Calu3 (cell line): ENCODE measurements at regions of chr1 and their contacts with region 1.

Region 1: GRCh38 chr1:153532769-153533599 is 2.8 kb downstream of the S100A6 start:
- DNase-seq: peak; percentile 93
- H3K4me3 Mint-ChIP-seq: peak overlapping the region; percentile 93
- H3K27ac Mint-ChIP-seq: peak overlapping the region; percentile 77
- H3K4me1 Mint-ChIP-seq: peaks cover 47% of the 10 kb centered on the region
- H3K27me3 Mint-ChIP-seq: no peaks in the 10 kb centered on the region
- CTCF ChIP-seq: peak; percentile 88

Region 2: GRCh38 chr1:153520230-153520629 is 12.8 kb before region 1 on chr1:
- CTCF ChIA-PET with region 1: interaction called, 34 read pairs
- intact Hi-C with region 1: no loop called
- DNase-seq: peak; percentile 84
- H3K4me3 Mint-ChIP-seq: peak overlapping the region; percentile 33
- H3K27ac Mint-ChIP-seq: peak overlapping the region; percentile 69
- H3K4me1 Mint-ChIP-seq: peaks cover 49% of the 10 kb centered on the region
- H3K27me3 Mint-ChIP-seq: no peaks in the 10 kb centered on the region
- CTCF ChIP-seq: no peak

Region 3: DNA sequence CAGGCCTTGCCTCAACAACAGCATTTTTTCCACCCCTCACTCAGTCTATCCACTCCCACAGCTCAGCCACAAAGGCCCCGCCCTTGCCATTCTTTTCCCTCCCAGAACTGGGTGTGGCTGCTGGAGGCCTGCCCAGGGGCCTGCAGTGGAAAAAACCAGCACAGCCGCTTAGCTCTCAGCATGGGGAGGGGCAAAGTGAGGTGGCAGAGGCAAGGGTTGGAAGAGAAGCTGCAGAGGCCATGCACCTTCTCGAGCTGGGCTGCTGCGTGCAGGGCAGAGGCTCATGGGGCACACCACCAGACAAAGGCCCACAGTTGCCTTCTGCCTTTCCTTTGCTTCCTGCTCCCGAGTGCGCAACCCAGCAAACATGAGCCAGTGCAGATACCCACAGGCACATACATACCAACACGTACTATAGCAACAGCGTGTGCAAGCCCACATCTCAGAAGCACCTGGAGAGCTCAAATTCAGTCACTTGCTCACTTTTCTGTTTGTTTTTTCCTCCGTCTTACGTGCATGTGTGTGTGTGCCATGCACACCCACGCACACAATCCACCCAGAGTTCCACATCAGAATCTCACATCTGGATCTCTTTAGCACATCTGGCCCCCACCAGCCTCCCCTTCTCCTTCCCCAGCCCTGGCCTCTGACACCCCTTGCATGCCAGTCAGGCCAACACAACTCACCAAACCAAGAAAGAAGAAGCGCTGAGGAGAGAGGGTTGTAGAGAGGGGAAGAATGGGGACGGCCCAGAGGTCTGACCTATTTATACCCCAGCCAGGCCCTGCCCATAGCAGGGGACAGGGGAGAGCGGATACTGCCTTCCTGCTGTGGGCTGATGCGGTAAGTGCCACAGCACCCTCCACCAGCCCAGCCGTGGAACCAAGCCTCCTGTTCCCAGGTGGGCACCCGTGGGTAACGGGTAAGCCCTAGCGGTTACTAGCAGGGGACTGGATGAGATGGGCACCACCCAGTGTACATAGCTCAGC is 12.4 kb after region 1 on chr1 and contains the start of gene S100A4:
- CTCF ChIA-PET with region 1: interaction called, 29 read pairs
- intact Hi-C with region 1: no loop called
- DNase-seq: peak; percentile 98
- H3K4me3 Mint-ChIP-seq: peak within 1 kb of the TSS; percentile 68
- H3K27ac Mint-ChIP-seq: peak within 1 kb of the TSS; percentile 94
- H3K4me1 Mint-ChIP-seq: peaks cover 87% of the 10 kb centered on the region
- H3K27me3 Mint-ChIP-seq: no peaks in the 10 kb centered on the region
- CTCF ChIP-seq: no peak
- total RNA-seq, gene S100A4: 19.8 and 20.5 TPM in 2 replicates

Region 4: GRCh38 chr1:153566440-153567379 is 33.7 kb after region 1 on chr1:
- CTCF ChIA-PET with region 1: interaction called, 117 read pairs
- intact Hi-C with region 1: loop called (anchors 1 kb)
- DNase-seq: peak; percentile 100
- H3K4me3 Mint-ChIP-seq: peak overlapping the region; percentile 36
- H3K27ac Mint-ChIP-seq: peak overlapping the region; percentile 96
- H3K4me1 Mint-ChIP-seq: peaks cover 63% of the 10 kb centered on the region
- H3K27me3 Mint-ChIP-seq: no peaks in the 10 kb centered on the region
- CTCF ChIP-seq: no peak

Region 5: GRCh38 chr1:153626922-153627796 is 94.2 kb after region 1 on chr1 and contains the start of gene S100A13:
- CTCF ChIA-PET with region 1: interaction called, 10 read pairs
- intact Hi-C with region 1: no loop called
- DNase-seq: peak; percentile 93
- H3K4me3 Mint-ChIP-seq: peak within 1 kb of the TSS; percentile 82
- H3K27ac Mint-ChIP-seq: peak within 1 kb of the TSS; percentile 81
- H3K4me1 Mint-ChIP-seq: peaks cover 39% of the 10 kb centered on the region
- H3K27me3 Mint-ChIP-seq: no peaks in the 10 kb centered on the region
- CTCF ChIP-seq: peak; percentile 90
- total RNA-seq, gene S100A13: 104 and 117 TPM in 2 replicates